Activated CD4-positive, alpha-beta T cell treated with anti-CD3 and anti-CD28 coated beads, Interleukin-2, amount 10 ng/mL, durations not matched to agents 24 days and 14 days (primary cell): ENCODE measurements at regions of chr20 and their contacts with region 1.

Region 1: GRCh38 chr20:44609511-44610312 is 27.3 kb downstream of the PKIG start:
- DNase-seq: peak; percentile 95
- H3K4me3 Mint-ChIP-seq: peak overlapping the region; percentile 64
- H3K27ac Mint-ChIP-seq: peak overlapping the region; percentile 82
- H3K4me1 Mint-ChIP-seq: peaks cover 8% of the 10 kb centered on the region
- H3K27me3 Mint-ChIP-seq: no peaks in the 10 kb centered on the region

Region 2: DNA sequence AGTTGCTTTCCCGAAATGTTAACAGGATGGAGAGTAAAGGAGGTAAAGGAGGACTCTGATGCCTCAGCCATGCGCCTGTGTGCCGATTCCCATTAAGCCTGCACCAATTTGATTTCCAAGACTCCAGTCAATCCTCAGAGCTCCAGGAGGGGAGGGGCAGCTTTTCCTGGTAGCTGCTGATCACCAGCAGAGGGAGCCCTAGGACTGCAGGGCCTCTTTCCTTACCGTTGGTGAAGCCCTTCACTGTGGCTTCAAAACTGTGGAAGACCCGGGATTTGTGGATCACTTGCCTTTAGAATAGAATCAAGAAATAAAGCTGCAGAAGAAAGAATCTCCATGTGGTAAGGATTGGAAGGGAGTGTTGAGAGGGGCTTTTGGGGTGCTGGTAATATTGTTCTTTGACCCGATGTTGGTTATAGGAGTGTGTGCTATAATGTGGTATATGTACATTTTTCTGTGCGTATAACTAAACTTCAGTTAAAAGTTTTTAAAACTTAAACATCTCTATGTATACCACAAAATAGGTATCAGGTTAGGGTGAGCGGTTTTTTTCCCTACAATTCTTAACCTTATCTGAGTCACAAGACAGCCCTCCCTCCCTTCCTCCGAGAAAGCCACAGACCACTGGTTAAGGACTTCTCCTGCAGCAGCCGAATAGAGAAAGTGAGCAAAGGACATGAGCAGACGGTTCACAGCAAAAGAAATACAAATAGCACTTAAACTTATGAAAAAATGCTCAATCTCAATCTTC is 392.2 kb before region 1 on chr20:
- intact Hi-C with region 1: loop called (anchors 1 kb)
- DNase-seq: peak; percentile 92
- H3K4me3 Mint-ChIP-seq: peak overlapping the region; percentile 77
- H3K27ac Mint-ChIP-seq: peak overlapping the region; percentile 63
- H3K4me1 Mint-ChIP-seq: peaks cover 30% of the 10 kb centered on the region
- H3K27me3 Mint-ChIP-seq: no peaks in the 10 kb centered on the region

Region 3: DNA sequence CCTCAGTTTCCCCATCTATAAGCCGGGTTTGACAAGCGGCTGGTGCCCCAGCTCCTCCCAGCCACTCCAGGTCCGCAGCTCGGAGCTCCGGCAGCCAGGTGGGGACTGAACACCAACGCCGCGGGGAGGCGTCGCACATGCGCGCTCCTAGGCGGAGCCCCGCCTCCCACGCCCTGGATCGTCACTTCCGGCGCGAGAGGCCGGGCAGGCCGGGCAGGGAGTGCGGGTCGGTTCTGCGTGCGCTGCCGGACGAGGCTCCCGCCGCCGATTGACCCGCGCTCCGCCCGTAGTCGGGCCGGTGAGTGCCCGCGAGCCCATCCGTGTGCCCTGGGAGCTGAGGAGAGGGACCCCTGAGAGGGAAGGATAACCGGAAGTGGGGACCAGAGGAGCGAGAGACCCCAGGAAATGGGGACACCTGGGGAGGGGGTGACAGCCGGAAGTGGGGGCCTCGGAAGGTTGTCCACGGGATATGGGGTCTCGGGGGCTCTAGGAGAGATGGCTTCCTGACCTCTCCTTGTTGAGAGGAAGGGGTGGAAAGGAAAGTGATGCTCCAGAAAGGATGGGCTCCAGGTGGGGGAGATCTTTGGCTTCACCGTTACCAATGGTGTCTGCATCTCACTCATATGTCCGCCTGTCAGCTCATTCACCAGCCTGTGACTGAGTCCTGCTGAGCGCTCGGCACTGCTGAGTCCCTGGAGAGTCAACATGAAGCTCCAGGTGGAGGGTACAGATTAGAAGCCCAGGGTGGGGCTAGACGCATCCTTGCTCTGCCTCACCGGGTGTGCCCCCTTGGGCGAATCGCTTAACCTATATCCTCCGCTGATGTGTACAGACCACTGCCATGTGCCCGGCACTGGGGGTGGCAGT is 133.8 kb before region 1 on chr20 and contains the start of gene TTPAL:
- intact Hi-C with region 1: loop called (anchors 1 kb)
- DNase-seq: peak; percentile 98
- H3K4me3 Mint-ChIP-seq: peak within 1 kb of the TSS; percentile 99
- H3K27ac Mint-ChIP-seq: peak within 1 kb of the TSS; percentile 99
- H3K4me1 Mint-ChIP-seq: peaks cover 12% of the 10 kb centered on the region
- H3K27me3 Mint-ChIP-seq: no peaks in the 10 kb centered on the region
- total RNA-seq, gene TTPAL: 22.6 and 23.2 TPM in 2 replicates

Region 4: GRCh38 chr20:44521484-44522481 is 87.9 kb before region 1 on chr20 and contains the start of gene SERINC3:
- intact Hi-C with region 1: loop called (anchors 5 kb)
- DNase-seq: peak; percentile 99
- H3K4me3 Mint-ChIP-seq: peak within 1 kb of the TSS; percentile 86
- H3K27ac Mint-ChIP-seq: peak within 1 kb of the TSS; percentile 86
- H3K4me1 Mint-ChIP-seq: peaks cover 29% of the 10 kb centered on the region
- H3K27me3 Mint-ChIP-seq: no peaks in the 10 kb centered on the region
- total RNA-seq, gene SERINC3: 47.1 and 49.6 TPM in 2 replicates

Region 5: DNA sequence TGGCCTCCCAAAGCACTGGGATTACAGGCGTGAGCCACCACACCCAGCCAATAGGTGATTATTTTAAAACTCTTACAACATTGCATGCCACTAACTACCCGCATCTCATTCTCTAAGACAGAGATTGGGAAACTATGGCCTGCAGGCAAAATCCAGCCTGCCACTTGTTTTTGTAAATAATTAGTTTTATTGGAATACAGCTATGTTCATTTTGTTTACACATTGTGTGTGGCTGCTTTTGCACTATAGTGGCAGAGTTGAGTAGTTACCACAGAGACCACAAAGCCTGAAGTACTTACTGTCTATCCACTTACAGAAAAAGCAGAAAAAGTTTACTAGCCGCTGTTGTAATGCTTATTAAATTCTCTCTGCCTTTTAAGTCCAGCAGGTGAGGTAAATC is 43.7 kb before region 1 on chr20:
- intact Hi-C with region 1: no loop called
- DNase-seq: no peak
- H3K4me3 Mint-ChIP-seq: no peak overlapping the region
- H3K27ac Mint-ChIP-seq: no peak overlapping the region
- H3K4me1 Mint-ChIP-seq: no peaks in the 10 kb centered on the region
- H3K27me3 Mint-ChIP-seq: peaks cover 14% of the 10 kb centered on the region

Region 6: DNA sequence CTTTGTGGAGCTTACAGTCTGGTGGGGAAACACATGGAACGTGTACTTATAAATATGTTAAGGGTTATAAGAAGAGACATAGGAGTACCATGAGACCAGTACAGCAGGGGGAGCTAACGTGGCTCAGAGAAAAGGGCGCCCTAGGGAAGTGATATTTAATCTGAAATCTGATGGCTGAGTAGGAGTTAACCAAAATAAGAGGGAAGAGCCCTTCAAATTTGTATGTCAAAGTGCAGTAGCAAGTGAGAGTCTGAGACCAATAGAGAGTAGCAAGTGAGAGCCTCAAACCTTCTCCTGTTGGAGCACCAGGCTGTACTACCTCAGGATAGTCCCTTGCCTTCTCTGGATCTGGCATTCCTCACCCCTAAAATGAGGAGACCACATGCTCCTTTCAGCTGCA is 33.4 kb before region 1 on chr20:
- intact Hi-C with region 1: loop called (anchors 5 kb)
- DNase-seq: no peak
- H3K4me3 Mint-ChIP-seq: no peak overlapping the region
- H3K27ac Mint-ChIP-seq: peak overlapping the region; percentile 79
- H3K4me1 Mint-ChIP-seq: peaks cover 22% of the 10 kb centered on the region
- H3K27me3 Mint-ChIP-seq: no peaks in the 10 kb centered on the region

Region 7: DNA sequence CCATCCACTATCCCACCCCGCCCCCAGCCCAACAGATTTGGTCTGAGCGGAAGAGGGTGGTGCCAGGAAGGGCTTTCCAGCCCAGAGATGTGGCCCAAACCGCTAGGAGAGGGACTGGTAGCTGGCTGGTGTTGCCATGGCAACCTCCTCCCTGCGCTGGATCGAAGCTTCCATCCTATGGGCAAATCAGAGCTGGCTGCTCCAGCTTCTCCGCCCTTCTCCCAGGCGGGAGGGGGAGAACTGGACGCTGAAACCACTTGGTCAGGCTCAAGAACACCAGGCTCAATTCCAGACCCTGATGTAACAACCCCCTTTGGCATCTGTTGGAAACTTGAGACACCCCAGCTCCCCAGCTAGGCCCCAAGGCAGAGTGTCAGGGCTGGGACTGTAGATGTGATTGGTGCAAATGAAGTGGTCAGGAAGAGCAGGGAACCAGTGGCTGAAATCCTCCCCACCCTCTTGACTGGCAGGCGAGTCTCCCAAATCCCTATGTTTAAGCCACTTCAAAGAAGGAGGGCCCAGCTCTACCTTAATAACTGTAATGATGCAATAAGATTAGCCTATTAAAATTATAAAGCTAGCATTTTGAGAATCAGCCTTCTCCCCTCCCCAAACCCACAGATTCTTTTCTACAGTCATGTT is 196.4 kb after region 1 on chr20:
- intact Hi-C with region 1: no loop called
- DNase-seq: no peak
- H3K4me3 Mint-ChIP-seq: no peak overlapping the region
- H3K27ac Mint-ChIP-seq: no peak overlapping the region
- H3K4me1 Mint-ChIP-seq: peaks cover 4% of the 10 kb centered on the region
- H3K27me3 Mint-ChIP-seq: peaks cover 54% of the 10 kb centered on the region